ENCODE measurements at regions of chr9 and their contacts with region 1.

Region 1: DNA sequence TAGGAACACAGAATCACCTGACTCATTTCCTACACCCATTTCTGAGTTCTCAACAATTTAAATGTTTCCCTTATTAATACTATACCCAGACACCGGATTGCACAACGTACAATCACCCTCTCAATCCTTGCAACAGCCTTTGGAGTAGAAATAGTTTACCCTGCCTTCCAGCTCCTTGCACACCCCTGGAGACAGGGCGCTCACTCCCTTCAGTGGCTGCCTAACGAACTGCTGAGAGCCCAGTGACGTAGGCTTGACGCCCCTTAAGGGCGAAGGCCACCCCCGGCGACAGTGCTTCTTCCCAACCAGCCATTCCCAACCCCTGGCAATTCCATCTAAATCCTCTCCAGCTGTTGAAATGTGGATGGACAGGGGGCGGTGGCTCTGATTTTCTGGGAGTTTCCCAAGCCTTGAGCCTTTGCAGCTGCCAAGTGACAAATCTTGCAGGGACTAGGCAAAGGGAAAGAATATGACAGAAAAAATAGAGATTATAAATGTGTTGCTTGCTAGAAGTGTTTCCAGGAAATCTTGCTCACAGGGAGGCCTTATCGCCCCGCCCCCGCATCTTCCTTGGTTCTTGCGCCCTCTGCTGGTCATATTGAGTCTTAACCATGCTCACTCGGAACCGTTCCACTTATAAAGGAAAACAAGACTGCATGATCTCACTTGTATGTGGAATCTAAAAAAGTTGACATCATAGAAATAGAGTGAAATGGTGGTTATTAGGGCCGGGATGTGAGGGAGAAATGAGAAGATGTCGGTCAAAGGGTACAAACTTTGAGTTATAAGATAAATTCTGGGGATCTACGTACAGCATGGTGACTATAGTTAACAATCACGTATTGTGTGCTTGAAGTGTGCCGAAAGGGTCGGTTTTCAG is 7.6 kb upstream of the BARX1 start:
- DNase-seq: peak; percentile 78
- ATAC-seq: peak; percentile 85
- H3K4me3 ChIP-seq: no peak overlapping the region
- H3K27ac ChIP-seq: no peak overlapping the region
- H3K4me1 ChIP-seq: peaks cover 1% of the 10 kb centered on the region; the same call in 1 of the 2 replicates
- H3K27me3 ChIP-seq: peaks cover 52% of the 10 kb centered on the region
- CTCF ChIP-seq: peak; percentile 92
- POLR2A ChIP-seq: no peak
- RAD21 ChIP-seq: peak; percentile 79

Region 2: GRCh38 chr9:92308893-92309292 is 1653.9 kb before region 1 on chr9:
- CTCF ChIA-PET with region 1: no interaction called
- POLR2A ChIA-PET with region 1: no interaction called
- dilution Hi-C with region 1: no loop called
- in situ Hi-C with region 1: no loop called
- intact Hi-C with region 1: no loop called
- DNase-seq: peak; percentile 34
- ATAC-seq: peak; percentile 27; the same call in 1 of the 2 replicates
- H3K4me3 ChIP-seq: no peak overlapping the region
- H3K27ac ChIP-seq: no peak overlapping the region
- H3K4me1 ChIP-seq: peaks cover 3% of the 10 kb centered on the region
- H3K27me3 ChIP-seq: no peaks in the 10 kb centered on the region
- CTCF ChIP-seq: no peak
- POLR2A ChIP-seq: no peak
- RAD21 ChIP-seq: no peak

Region 3: DNA sequence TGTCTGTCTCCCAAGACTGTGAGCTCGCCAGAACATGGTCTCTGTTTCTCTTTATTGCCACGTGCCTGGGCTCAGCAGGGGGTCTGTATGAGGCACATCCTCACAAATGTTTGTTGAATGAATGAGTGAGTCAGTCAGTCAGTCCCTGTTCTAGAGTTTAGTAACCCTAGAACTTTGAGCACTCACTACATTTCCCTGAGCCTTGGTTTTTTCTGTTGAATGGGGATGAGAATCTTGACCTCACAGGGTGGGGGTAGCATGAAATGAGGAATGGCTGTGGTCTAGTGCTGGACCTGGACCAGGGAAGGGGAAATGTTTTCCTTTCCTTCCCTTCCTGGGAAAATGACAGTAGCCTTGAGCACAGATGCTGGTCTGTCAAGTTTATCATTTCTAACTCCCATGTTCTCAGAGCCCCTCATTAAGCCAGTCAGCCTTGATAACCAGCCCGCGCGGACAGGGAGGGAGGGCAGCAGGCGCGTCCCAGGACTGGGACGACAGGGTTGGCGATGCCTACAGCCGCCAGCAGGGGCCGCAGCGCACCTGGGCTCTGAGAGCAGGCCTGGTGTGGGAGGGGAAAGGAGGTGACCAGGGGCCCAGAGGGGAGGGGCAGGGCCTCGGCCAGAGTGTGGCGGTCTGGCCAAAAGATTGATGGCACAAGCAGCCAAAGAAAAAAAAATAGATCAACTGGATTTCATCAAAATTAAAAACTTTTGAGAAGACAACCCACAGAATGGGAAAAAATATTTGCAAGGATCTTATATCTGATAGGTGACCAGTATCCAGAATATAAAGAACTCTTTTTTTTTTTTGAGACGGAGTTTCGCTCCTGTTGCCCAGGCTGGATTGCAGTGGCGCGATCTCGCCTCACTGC is 803.0 kb before region 1 on chr9:
- CTCF ChIA-PET with region 1: no interaction called
- POLR2A ChIA-PET with region 1: no interaction called
- dilution Hi-C with region 1: no loop called
- in situ Hi-C with region 1: loop called (anchors 25 kb)
- intact Hi-C with region 1: loop called (anchors 10 kb)
- DNase-seq: peak; percentile 77
- ATAC-seq: peak; percentile 99
- H3K4me3 ChIP-seq: no peak overlapping the region
- H3K27ac ChIP-seq: no peak overlapping the region; the same call in 1 of the 2 replicates
- H3K4me1 ChIP-seq: peaks cover 3% of the 10 kb centered on the region; the same call in 1 of the 2 replicates
- H3K27me3 ChIP-seq: peaks cover 4% of the 10 kb centered on the region
- CTCF ChIP-seq: peak; percentile 97
- POLR2A ChIP-seq: no peak
- RAD21 ChIP-seq: peak; percentile 94

Region 4: GRCh38 chr9:93422977-93423624 is 539.7 kb before region 1 on chr9:
- CTCF ChIA-PET with region 1: no interaction called
- POLR2A ChIA-PET with region 1: no interaction called
- dilution Hi-C with region 1: no loop called
- in situ Hi-C with region 1: loop called (anchors 25 kb)
- intact Hi-C with region 1: no loop called
- DNase-seq: peak; percentile 10
- ATAC-seq: peak; percentile 56
- H3K4me3 ChIP-seq: no peak overlapping the region
- H3K27ac ChIP-seq: no peak overlapping the region
- H3K4me1 ChIP-seq: no peaks in the 10 kb centered on the region
- H3K27me3 ChIP-seq: peaks cover 1% of the 10 kb centered on the region; the same call in 1 of the 2 replicates
- CTCF ChIP-seq: no peak
- POLR2A ChIP-seq: no peak
- RAD21 ChIP-seq: no peak

Region 5: DNA sequence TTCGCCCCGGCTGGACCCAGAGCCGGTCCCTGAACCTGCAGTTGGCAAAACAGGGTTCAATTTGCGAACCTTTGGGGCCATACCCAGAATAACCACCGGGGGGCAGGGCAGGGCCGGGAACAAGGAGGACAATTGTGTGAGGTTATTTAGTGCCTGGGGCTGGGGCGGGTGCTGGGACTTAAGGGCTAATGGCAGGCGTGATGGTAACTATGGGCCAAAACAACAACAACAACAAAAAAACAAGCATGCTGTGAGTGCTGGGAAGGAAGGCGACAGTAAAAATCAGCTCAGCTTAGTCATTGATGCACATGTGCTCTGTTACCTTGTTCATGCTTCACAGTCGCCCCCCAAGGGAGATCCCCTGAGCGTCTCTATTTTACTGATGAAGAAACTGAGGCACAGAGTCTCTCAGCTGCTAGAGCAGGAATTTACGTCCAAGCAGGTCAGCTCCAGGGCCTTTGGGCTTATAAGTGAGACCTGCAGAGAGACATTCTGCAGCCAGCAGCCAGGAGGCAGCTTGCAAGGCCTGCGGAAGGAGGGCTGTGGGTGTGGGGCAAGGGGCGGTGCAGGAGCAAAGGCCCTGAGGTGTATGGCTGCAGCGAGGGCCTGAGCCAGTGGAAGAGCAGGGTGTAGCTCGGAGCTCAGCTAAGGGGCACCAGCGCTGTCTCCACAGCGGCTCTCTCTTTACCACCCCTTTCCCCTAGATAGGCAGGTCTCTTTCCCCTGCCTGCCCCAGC is 280.4 kb before region 1 on chr9:
- CTCF ChIA-PET with region 1: interaction called, 6 read pairs
- POLR2A ChIA-PET with region 1: no interaction called
- dilution Hi-C with region 1: no loop called
- in situ Hi-C with region 1: no loop called
- intact Hi-C with region 1: loop called (anchors 1 kb)
- DNase-seq: peak; percentile 23
- ATAC-seq: peak; percentile 88
- H3K4me3 ChIP-seq: no peak overlapping the region
- H3K27ac ChIP-seq: no peak overlapping the region
- H3K4me1 ChIP-seq: no peaks in the 10 kb centered on the region
- H3K27me3 ChIP-seq: no peaks in the 10 kb centered on the region; the same call in 1 of the 2 replicates
- CTCF ChIP-seq: peak; percentile 77
- POLR2A ChIP-seq: no peak
- RAD21 ChIP-seq: peak; percentile 78

Region 6: DNA sequence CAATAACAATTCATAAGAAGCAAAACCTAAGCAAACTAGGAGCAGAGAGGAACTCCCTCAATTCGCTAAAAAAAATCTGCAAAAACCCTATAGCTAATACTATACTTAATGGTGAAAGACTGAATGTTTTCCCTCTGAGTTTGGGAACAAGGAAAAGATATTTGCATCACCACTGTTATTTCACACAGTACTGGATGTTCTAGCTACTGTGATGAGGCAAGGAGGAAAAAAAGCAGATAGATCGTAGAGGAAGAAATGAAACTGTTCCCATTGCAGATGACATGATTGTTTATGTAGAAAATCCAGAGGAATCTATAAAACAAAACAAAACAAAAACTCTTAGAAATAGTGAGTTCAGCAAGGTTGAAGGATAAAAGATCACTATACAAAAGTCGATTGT is 269.7 kb before region 1 on chr9:
- CTCF ChIA-PET with region 1: no interaction called
- POLR2A ChIA-PET with region 1: no interaction called
- dilution Hi-C with region 1: no loop called
- in situ Hi-C with region 1: loop called (anchors 5 kb)
- intact Hi-C with region 1: no loop called
- DNase-seq: no peak
- ATAC-seq: no peak
- H3K4me3 ChIP-seq: no peak overlapping the region
- H3K27ac ChIP-seq: no peak overlapping the region
- H3K4me1 ChIP-seq: no peaks in the 10 kb centered on the region
- H3K27me3 ChIP-seq: no peaks in the 10 kb centered on the region
- CTCF ChIP-seq: no peak
- POLR2A ChIP-seq: no peak
- RAD21 ChIP-seq: no peak

Region 7: GRCh38 chr9:93827545-93828330 is 135.1 kb before region 1 on chr9:
- CTCF ChIA-PET with region 1: no interaction called
- POLR2A ChIA-PET with region 1: no interaction called
- dilution Hi-C with region 1: no loop called
- in situ Hi-C with region 1: no loop called
- intact Hi-C with region 1: loop called (anchors 5 kb)
- DNase-seq: peak; percentile 28
- ATAC-seq: peak; percentile 100
- H3K4me3 ChIP-seq: peak overlapping the region; percentile 19; the same call in 1 of the 2 replicates
- H3K27ac ChIP-seq: no peak overlapping the region
- H3K4me1 ChIP-seq: no peaks in the 10 kb centered on the region
- H3K27me3 ChIP-seq: peaks cover 9% of the 10 kb centered on the region; the same call in 1 of the 2 replicates
- CTCF ChIP-seq: peak; percentile 69
- POLR2A ChIP-seq: no peak
- RAD21 ChIP-seq: peak; percentile 46

Region 8: DNA sequence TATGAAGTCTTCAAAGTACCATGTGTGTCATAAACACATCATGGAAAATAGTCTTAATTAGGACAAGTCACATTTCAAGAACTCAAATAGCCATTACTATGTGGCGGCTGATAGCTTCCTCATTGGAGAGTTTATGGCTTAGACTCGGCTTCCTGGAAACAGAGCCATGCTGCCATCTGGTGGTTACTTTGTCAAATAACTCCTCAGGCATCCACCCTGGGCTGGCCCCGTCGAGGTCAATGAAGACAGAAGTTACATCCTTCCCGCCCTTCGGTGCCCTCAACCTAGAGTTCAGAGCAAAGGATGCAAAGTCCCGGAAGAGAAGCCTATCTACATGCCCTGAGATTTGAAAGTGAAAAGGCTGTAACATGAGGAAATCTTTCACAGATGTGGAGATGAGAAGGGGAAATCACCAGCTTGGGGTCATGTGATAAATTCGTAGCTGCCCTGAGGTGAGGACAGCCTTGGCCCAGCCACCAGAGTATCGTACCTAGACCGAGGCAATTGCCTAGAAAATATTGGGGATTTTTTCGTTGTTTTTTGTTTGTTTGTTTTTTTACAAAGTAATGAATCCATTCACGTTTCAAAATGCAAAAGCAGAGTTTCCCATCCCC is 250.8 kb after region 1 on chr9:
- CTCF ChIA-PET with region 1: no interaction called
- POLR2A ChIA-PET with region 1: no interaction called
- dilution Hi-C with region 1: no loop called
- in situ Hi-C with region 1: no loop called
- intact Hi-C with region 1: loop called (anchors 5 kb)
- DNase-seq: peak; percentile 72
- ATAC-seq: peak; percentile 98
- H3K4me3 ChIP-seq: no peak overlapping the region
- H3K27ac ChIP-seq: no peak overlapping the region
- H3K4me1 ChIP-seq: peaks cover 2% of the 10 kb centered on the region
- H3K27me3 ChIP-seq: peaks cover 2% of the 10 kb centered on the region; the same call in 1 of the 2 replicates
- CTCF ChIP-seq: peak; percentile 96
- POLR2A ChIP-seq: peak; percentile 54; the same call in 1 of the 2 replicates
- RAD21 ChIP-seq: peak; percentile 99

Measured in IMR-90 (cell line).